Activated CD8-positive, alpha-beta T cell treated with anti-CD3 and anti-CD28 coated beads for 36 hours (primary cell): ENCODE measurements at regions of chr2 and their contacts with region 1.

Region 1: GRCh38 chr2:128090945-128091725 is at the start of gene UGGT1:
- DNase-seq: peak; percentile 97
- ATAC-seq: peak; percentile 97
- H3K4me3 Mint-ChIP-seq: peak within 1 kb of the TSS; percentile 94
- H3K27ac Mint-ChIP-seq: peak within 1 kb of the TSS; percentile 90
- H3K4me1 Mint-ChIP-seq: peaks cover 44% of the 10 kb centered on the region
- H3K27me3 Mint-ChIP-seq: no peaks in the 10 kb centered on the region
- CTCF ChIP-seq: no peak
- total RNA-seq, gene UGGT1: 47.7 to 51.6 TPM

Region 2: GRCh38 chr2:128027801-128028667 is 63.1 kb before region 1 on chr2 and contains the start of gene SAP130:
- CTCF ChIA-PET with region 1: interaction called, 3 read pairs
- POLR2A ChIA-PET with region 1: interaction called, 29 read pairs
- intact Hi-C with region 1: loop called (anchors 2 kb)
- DNase-seq: peak; percentile 99
- ATAC-seq: peak; percentile 82
- H3K4me3 Mint-ChIP-seq: peak within 1 kb of the TSS; percentile 91
- H3K27ac Mint-ChIP-seq: peak within 1 kb of the TSS; percentile 80
- H3K4me1 Mint-ChIP-seq: peaks cover 17% of the 10 kb centered on the region
- H3K27me3 Mint-ChIP-seq: no peaks in the 10 kb centered on the region
- CTCF ChIP-seq: no peak
- total RNA-seq, gene SAP130: 24.4 to 31.9 TPM

Region 3: GRCh38 chr2:128103407-128103806 is 12.3 kb after region 1 on chr2:
- CTCF ChIA-PET with region 1: interaction called, 3 read pairs
- POLR2A ChIA-PET with region 1: interaction called, 16 read pairs
- intact Hi-C with region 1: no loop called
- DNase-seq: no peak
- ATAC-seq: no peak
- H3K4me3 Mint-ChIP-seq: no peak overlapping the region
- H3K27ac Mint-ChIP-seq: no peak overlapping the region
- H3K4me1 Mint-ChIP-seq: peaks cover 14% of the 10 kb centered on the region
- H3K27me3 Mint-ChIP-seq: no peaks in the 10 kb centered on the region
- CTCF ChIP-seq: no peak